ENCODE measurements at regions of chr14 and their contacts with region 1.

Region 1: GRCh38 chr14:105086833-105087307 is 21.6 kb upstream of the GPR132 start:
- DNase-seq: peak; percentile 85 to 87
- H3K4me3 ChIP-seq: peak overlapping the region in 1 of 3 donors; percentile 22
- H3K27ac ChIP-seq: no peak overlapping the region
- H3K4me1 ChIP-seq: peaks cover 20 to 42% of the 10 kb centered on the region in 2 donors
- H3K27me3 ChIP-seq: no peaks in the 10 kb centered on the region
- CTCF ChIP-seq: peak; percentile 62 to 92 (median 78)
- POLR2A ChIP-seq: peak in 1 of 2 donors; percentile 22

Region 2: DNA sequence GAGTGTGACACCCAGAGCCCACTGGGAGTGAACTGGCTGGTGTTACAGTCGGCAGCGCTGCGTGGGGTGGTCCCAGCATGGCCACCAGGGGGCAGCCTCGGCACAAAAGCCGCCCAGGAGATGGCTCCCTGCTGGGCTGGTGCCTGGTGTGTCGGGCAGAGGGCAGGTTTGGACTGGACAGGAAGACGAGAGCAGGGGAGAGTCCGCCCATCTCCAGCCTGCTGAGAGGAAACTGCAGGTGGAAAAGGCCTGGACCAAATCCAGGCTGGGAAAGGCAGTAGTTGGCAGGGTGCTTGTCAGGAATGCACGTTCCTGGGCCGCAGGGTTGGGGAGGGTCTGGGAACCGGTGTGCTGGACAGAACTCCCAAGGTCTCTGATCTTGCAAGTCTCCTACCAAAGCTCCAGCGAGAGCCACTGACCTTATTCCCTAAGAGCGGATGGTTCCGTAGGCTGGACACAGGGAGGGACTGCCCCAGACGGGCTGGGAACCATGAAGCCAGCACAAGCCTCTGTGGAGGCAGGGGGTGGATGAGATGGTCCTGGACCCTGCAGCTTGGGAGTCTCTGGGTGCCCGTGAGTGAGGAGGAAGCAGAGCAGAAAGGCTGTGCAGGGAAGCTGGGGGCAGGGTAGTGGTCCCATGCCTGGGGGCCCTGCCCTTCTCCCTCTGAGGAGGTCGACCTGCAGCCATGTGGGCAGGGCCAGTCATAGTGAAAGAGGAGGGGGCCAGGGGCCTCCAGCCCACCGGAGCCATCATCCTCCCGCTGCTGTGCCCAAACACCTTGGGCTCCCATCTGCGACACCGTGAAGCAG is 110.5 kb before region 1 on chr14:
- intact Hi-C with region 1: loop called (anchors 5 kb)
- DNase-seq: peak; percentile 86 to 91
- H3K4me3 ChIP-seq: no peak overlapping the region
- H3K27ac ChIP-seq: no peak overlapping the region
- H3K4me1 ChIP-seq: peaks cover 52 to 94% of the 10 kb centered on the region in 2 donors
- H3K27me3 ChIP-seq: no peaks in the 10 kb centered on the region
- CTCF ChIP-seq: peak; percentile 84 to 94 (median 88)
- POLR2A ChIP-seq: no peak

Region 3: DNA sequence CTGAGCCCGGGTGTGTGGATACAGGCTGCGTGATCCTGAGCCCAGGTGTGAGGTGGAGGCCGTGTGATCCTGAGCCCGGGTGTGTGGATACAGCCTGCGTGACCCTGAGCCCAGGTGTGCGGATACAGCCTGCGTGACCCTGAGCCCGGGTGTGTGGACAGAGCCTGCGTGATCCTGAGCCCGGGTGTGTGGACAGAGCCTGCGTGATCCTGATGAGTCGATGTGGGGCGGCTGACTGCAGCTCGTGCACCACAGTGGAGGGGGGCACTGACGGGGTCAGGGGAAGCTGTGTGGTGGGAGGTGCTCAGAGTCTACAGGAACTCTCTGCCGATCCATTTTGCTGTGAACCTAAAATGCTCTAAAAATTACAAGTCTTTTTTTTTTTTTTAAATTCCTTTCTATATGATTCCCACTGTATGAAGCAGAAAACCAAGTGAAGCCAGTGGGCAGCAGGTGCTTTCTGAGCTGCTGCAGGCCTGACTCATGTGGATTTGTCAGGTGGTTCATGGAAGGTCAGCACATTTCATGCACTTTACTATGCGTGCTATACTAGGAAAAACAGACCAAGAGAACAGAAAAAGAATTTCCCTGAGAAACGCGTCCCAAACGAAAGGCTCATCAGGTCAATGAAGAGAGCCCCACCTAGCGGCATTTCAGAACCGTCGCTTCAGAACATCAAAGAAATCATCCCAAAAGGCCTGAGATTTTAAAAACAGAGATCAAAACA is 194.7 kb after region 1 on chr14:
- intact Hi-C with region 1: loop called (anchors 5 kb)
- DNase-seq: peak; percentile 31 to 41
- H3K4me3 ChIP-seq: no peak overlapping the region
- H3K27ac ChIP-seq: no peak overlapping the region
- H3K4me1 ChIP-seq: peaks cover 4 to 5% of the 10 kb centered on the region in 2 donors
- H3K27me3 ChIP-seq: no peaks in the 10 kb centered on the region
- CTCF ChIP-seq: peak; percentile 25 to 74 (median 58)
- POLR2A ChIP-seq: no peak

Region 4: GRCh38 chr14:105351920-105352851 is 265.3 kb after region 1 on chr14:
- intact Hi-C with region 1: loop called (anchors 5 kb)
- DNase-seq: peak; percentile 90 to 92
- H3K4me3 ChIP-seq: no peak overlapping the region
- H3K27ac ChIP-seq: peak overlapping the region; percentile 2 to 49 (median 30)
- H3K4me1 ChIP-seq: peaks cover 0 to 7% of the 10 kb centered on the region in 2 donors
- H3K27me3 ChIP-seq: no peaks in the 10 kb centered on the region
- CTCF ChIP-seq: peak; percentile 63 to 94 (median 92)
- POLR2A ChIP-seq: no peak